HEK293T (cell line): ENCODE measurements at regions of chr4 and their contacts with region 1.

Region 1: DNA sequence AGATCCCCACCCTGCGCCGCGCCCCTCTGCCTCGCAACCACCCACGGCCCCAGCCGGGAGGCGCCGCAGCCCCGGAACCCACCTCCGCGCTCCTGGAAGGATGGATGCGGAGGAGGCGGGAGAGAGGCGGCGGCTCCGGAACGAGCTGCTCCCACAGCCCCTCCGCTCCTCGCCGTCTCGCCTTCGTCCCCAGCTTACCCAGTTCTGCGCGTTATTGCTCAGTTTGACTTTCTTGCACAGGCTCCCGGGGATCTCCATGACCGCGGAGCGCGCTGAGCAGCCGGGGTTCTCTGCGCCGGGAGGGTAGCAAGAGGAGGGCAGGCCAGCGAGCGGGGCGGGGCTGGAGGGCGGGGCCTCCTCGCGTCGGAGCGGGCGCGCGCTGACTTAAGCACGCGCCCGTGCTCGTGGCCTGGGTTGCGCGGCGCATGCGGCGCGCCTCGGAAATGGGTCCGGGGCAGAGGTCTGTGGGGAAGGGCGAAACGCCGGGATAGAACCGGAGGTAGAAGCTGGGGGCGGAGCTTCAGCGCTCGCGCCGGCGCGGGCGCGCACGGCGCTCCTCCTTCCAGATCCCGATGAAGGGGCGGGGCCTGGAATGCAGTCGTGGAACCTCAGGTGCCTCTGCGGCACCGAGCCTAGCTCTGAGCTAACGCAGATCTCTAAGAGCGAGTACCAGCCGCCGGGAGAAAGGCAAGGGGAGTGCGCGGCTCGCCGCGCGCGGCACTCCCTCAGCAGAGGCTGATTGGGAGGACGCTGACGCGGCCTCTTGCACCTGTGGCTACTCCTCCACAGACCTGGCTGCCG is at the start of gene PAPSS1:
- DNase-seq: peak; percentile 93

Region 2: GRCh38 chr4:107736924-107737448 is 16.9 kb after region 1 on chr4:
- CTCF ChIA-PET with region 1: interaction called, 5 read pairs
- POLR2A ChIA-PET with region 1: interaction called, 10 read pairs
- DNase-seq: peak; percentile 69